ENCODE measurements at regions of chr5 and their contacts with region 1.

Region 1: DNA sequence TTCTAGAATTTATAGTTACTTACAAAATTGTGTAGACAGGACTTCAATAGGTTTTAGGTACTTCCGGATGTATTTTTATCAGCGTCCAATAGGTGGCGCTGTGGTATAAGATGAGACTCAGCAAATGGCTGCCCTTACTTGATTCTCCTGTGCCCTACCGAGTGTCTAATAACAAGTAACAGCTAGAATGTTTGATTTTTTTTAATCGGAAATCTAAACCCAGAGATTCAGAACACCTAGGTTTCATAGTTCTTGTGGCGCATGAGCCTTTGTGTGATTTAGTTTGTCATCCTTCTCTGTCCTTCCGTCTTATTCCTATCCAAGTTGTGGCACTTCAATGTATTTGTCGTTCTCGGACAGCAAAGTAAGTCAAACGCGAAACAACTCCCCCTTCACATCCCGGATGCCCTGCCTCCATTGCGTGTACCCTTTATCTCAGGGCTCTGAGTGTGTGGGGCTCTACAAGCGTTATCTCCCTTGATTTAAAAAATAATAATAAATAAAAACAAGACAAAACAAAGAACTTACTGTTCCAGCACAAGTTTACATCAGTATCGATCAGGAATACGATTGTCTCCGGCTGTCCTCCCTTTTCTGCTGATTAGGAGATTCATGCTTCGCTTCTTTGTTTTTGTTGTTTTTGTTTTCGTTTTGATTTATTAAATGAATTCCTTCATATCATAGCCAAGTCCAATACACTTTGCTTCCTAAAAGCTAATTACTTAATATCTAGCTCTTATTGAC is 50.7 kb upstream of the SLC30A5 start:
- DNase-seq: peak; percentile 89 to 95
- ATAC-seq: peak; percentile 95
- H3K4me3 ChIP-seq: peak overlapping the region; percentile 55
- H3K27ac ChIP-seq: peak overlapping the region; percentile 73 to 75
- H3K4me1 ChIP-seq: peaks cover 10% of the 10 kb centered on the region
- CTCF ChIP-seq: peak; percentile 95
- EP300 ChIP-seq: no peak
- POLR2A ChIP-seq: no peak
- RAD21 ChIP-seq: peak; percentile 93 to 94

Region 2: DNA sequence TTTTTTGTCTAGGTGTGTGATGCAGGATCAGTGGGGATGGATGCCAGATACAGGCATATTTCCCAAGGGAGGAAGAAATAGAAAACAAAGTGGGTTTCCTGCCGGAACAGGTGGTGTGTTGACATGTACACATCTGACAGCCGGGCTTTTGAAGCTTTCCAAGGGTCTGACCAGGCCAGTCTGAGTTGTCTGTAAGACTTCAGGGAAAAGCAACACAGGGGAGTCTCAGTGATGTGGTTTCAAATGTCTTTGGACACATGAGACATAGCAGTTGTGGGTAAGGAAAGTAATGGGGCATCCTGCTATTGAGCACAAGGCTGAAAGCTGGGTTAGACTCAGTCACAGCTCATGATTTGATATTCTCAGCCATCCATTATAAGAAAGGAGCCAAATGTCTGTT is 552.7 kb before region 1 on chr5:
- CTCF ChIA-PET with region 1: no interaction called
- POLR2A ChIA-PET with region 1: no interaction called
- DNase-seq: no peak
- ATAC-seq: no peak
- H3K4me3 ChIP-seq: no peak overlapping the region
- H3K27ac ChIP-seq: no peak overlapping the region
- H3K4me1 ChIP-seq: no peaks in the 10 kb centered on the region
- CTCF ChIP-seq: no peak
- EP300 ChIP-seq: no peak
- POLR2A ChIP-seq: no peak
- RAD21 ChIP-seq: no peak

Region 3: GRCh38 chr5:68983959-68984358 is 59.1 kb before region 1 on chr5:
- CTCF ChIA-PET with region 1: no interaction called
- POLR2A ChIA-PET with region 1: no interaction called
- DNase-seq: no peak
- ATAC-seq: no peak
- H3K4me3 ChIP-seq: no peak overlapping the region
- H3K27ac ChIP-seq: no peak overlapping the region
- H3K4me1 ChIP-seq: no peaks in the 10 kb centered on the region
- CTCF ChIP-seq: no peak
- EP300 ChIP-seq: no peak
- POLR2A ChIP-seq: no peak
- RAD21 ChIP-seq: no peak

Region 4: GRCh38 chr5:69083412-69083811 is 40.3 kb after region 1 on chr5:
- CTCF ChIA-PET with region 1: interaction called, 17 read pairs
- POLR2A ChIA-PET with region 1: no interaction called
- DNase-seq: peak in 1 of 2 experiments; percentile 66
- ATAC-seq: peak; percentile 70 to 96; a peak in 5 of 6 replicates
- H3K4me3 ChIP-seq: no peak overlapping the region
- H3K27ac ChIP-seq: no peak overlapping the region
- H3K4me1 ChIP-seq: 0 out of 3 replicates have a peak, but pooled peaks cover 4% of the 10 kb centered on the region
- CTCF ChIP-seq: no peak; the same call in 2 of the 3 replicates
- EP300 ChIP-seq: no peak
- POLR2A ChIP-seq: no peak
- RAD21 ChIP-seq: peak in 1 of 2 experiments; percentile 44; a peak in 2 of 5 replicates

Measured in A549 (cell line).